Motor neuron (in vitro differentiated cells): ENCODE measurements at regions of chr4 and their contacts with region 1.

Region 1: DNA sequence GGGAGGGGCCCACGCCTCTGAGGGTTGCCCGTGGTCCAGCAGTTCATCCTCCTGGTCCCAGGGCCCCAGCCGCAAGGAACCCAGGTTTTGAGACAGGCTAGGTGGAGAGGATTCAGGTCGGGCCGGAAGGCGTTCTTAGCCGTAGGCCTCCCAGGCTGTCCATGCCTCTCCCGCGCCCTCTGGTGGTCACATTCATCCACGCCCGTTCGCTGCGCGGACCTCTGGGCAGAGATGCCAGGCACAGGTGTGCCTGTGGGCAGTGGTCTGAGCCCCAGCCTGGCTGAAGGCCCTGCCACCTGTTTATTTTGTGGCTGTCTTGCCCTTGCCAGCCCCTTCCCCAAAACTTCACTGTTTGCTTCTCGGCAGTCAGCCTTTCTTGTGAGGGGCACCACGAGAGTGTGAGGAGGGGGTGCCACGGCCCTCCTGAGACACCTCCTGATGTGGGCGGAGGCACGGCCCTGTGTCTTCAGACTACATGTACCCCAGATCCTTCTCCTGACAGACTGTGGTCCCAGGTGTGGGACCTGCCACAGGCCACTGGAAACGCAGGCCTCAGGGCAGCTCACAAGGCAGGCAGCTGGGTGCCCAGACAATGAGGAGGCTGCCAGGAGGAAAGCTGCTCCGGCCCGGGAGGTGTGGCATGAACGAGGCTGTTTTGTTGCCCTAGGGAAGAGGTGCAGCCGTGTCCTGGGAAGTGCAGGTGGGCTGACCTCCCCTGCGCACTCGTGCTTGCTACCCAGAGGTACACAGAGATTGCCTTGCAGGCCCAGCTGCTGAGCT is 5.0 kb downstream of the UVSSA start:
- ATAC-seq: peak in 4 of 8 experiments; percentile 4 to 12 (median 8)
- H3K4me3 ChIP-seq: peak overlapping the region in 1 of 5 donors; percentile 2
- H3K27ac ChIP-seq: peak overlapping the region in 1 of 2 donors; percentile 37
- H3K4me1 ChIP-seq: peaks cover 25 to 30% of the 10 kb centered on the region in 2 donors

Region 2: GRCh38 chr4:1628892-1629698 is 277.1 kb after region 1 on chr4:
- in situ Hi-C with region 1: loop called in 3 of 9 experiments (anchors 25 kb)
- ATAC-seq: peak; percentile 86 to 96 (median 90)
- H3K4me3 ChIP-seq: no peak overlapping the region
- H3K27ac ChIP-seq: no peak overlapping the region
- H3K4me1 ChIP-seq: peaks cover 7 to 12% of the 10 kb centered on the region in 2 donors

Region 3: GRCh38 chr4:1726146-1726934 is 374.3 kb after region 1 on chr4:
- in situ Hi-C with region 1: loop called in 1 of 9 experiments (anchors 25 kb)
- ATAC-seq: peak; percentile 40 to 76 (median 67)
- H3K4me3 ChIP-seq: no peak overlapping the region
- H3K27ac ChIP-seq: no peak overlapping the region
- H3K4me1 ChIP-seq: peaks cover 0 to 11% of the 10 kb centered on the region in 2 donors